ENCODE measurements at regions of chr22 and their contacts with region 1.

Region 1: GRCh38 chr22:40922484-40923303 is 28.5 kb upstream of the RBX1 start:
- DNase-seq: peak in 1 of 5 donors; percentile 14
- ATAC-seq: peak; percentile 29 to 77 (median 72)
- H3K4me3 ChIP-seq: no peak overlapping the region
- H3K27ac ChIP-seq: no peak overlapping the region
- H3K4me1 ChIP-seq: peaks cover 0 to 4% (median 0%) of the 10 kb centered on the region in 12 donors
- H3K27me3 ChIP-seq: no peaks in the 10 kb centered on the region
- CTCF ChIP-seq: peak; percentile 69 to 83 (median 76)
- POLR2A ChIP-seq: no peak

Region 2: DNA sequence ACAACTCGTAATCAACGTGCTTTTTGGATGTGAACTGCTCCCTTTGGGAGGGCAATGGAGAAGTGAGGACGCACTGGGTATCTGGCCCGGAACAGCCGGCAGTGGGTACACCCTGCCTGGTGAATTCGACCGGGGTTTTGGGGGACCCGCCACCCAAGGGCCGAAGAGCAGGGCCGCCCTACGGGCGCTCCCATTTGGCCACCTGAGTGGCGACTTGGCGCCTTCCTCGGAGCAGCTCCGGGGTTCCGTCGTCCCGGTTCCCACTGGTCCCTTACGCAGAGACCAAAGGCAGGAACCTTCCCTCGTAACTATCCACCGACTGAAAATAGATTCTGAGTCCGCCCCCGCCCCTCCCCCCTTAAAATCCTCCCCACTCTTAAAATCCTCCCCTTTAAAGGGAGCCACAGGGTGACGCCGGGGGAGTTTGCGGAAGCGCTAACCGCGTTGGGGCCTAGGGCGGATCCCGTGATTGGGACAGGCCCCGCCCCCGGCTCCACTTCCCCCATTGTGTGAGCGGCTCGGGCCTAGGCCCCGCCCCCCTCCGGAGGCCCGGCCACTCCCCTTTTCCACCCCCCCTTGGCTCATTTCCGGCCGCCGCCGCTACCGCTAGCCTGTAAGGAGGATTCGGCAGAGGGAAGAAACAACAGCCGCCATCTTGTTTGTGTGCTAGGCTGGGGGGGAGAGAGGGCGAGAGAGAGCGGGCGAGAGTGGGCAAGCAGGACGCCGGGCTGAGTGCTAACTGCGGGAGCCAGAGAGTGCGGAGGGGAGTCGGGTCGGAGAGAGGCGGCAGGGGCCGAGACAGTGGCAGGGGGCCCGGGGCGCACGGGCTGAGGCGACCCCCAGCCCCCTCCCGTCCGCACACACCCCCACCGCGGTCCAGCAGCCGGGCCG is 168.7 kb after region 1 on chr22:
- intact Hi-C with region 1: loop called in 1 of 10 experiments (anchors 10 kb)
- DNase-seq: peak; percentile 99 to 100 (median 99)
- ATAC-seq: peak; percentile 96 to 99 (median 98)
- H3K4me3 ChIP-seq: peak overlapping the region; percentile 73 to 100 (median 86)
- H3K27ac ChIP-seq: peak overlapping the region; percentile 98 to 100 (median 100)
- H3K4me1 ChIP-seq: peaks cover 10 to 35% (median 27%) of the 10 kb centered on the region in 12 donors
- H3K27me3 ChIP-seq: no peaks in the 10 kb centered on the region
- CTCF ChIP-seq: no peak
- POLR2A ChIP-seq: peak; percentile 41 to 76

Region 3: DNA sequence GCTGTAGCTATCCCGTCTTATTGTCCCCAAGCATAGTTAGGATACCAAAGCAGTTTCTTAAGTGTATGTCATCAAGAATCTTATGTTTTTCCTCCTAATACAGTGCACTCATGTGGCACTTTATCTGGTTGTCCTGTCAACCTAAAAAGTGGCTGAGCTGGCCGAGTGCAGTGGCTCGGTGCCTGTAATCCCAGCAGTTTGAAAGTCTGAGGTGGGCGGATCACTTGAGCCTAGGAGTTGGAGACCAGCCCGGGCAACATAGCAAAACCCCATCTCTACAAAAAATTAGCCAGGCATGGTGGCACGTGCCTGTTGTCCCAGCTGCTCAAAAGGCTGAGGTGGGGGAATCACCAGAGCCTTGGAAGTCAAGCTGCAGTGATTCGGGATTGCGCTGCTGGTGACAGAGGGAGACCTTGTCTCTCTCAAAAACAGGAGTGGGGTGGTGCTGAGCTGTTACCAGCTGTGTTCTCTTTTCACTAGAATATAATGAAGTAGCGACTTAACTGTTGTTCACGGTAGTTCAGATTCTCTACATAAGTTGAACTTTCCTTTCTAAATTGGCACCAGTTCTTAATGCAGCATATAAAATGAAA is 217.8 kb after region 1 on chr22:
- intact Hi-C with region 1: loop called in 2 of 10 experiments (anchors 5 to 10 kb)
- DNase-seq: peak in 2 of 5 donors; percentile 12 to 29
- ATAC-seq: peak; percentile 50 to 74 (median 66)
- H3K4me3 ChIP-seq: no peak overlapping the region
- H3K27ac ChIP-seq: peak overlapping the region in 1 of 12 donors; percentile 28
- H3K4me1 ChIP-seq: peaks cover 0 to 17% (median 7%) of the 10 kb centered on the region in 12 donors
- H3K27me3 ChIP-seq: no peaks in the 10 kb centered on the region
- CTCF ChIP-seq: no peak
- POLR2A ChIP-seq: no peak

Region 4: DNA sequence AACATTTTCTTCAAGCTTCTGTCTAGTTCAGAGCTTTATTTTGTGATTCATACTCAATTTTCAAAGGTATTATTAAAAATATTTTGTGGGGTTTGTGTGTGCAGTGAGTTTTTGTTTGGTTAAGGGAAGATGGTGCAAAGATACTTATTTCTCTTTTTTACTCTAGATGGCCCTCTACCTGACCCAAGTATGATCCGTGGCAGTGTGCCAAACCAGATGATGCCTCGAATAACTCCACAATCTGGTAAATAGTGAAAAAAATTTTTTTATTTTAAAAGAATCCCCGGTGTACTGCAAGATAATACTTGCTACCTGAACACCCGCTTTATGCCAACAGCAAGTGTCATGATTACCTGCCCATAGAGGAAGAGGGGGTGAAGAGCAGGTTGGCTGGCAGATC is 223.9 kb after region 1 on chr22:
- intact Hi-C with region 1: loop called in 2 of 10 experiments (anchors 5 to 10 kb)
- DNase-seq: no peak
- ATAC-seq: no peak
- H3K4me3 ChIP-seq: no peak overlapping the region
- H3K27ac ChIP-seq: no peak overlapping the region
- H3K4me1 ChIP-seq: no peaks in the 10 kb centered on the region
- H3K27me3 ChIP-seq: no peaks in the 10 kb centered on the region
- CTCF ChIP-seq: no peak
- POLR2A ChIP-seq: no peak

Region 5: GRCh38 chr22:41237707-41238569 is 315.2 kb after region 1 on chr22:
- intact Hi-C with region 1: loop called in 2 of 10 experiments (anchors 5 kb)
- DNase-seq: peak; percentile 74 to 89 (median 80)
- ATAC-seq: peak; percentile 10 to 77 (median 66)
- H3K4me3 ChIP-seq: peak overlapping the region in 11 of 12 donors; percentile 0 to 62 (median 53)
- H3K27ac ChIP-seq: peak overlapping the region in 11 of 12 donors; percentile 10 to 73 (median 58)
- H3K4me1 ChIP-seq: peaks cover 0 to 42% (median 17%) of the 10 kb centered on the region in 12 donors
- H3K27me3 ChIP-seq: no peaks in the 10 kb centered on the region
- CTCF ChIP-seq: peak; percentile 29 to 80 (median 56)
- POLR2A ChIP-seq: no peak

Region 6: DNA sequence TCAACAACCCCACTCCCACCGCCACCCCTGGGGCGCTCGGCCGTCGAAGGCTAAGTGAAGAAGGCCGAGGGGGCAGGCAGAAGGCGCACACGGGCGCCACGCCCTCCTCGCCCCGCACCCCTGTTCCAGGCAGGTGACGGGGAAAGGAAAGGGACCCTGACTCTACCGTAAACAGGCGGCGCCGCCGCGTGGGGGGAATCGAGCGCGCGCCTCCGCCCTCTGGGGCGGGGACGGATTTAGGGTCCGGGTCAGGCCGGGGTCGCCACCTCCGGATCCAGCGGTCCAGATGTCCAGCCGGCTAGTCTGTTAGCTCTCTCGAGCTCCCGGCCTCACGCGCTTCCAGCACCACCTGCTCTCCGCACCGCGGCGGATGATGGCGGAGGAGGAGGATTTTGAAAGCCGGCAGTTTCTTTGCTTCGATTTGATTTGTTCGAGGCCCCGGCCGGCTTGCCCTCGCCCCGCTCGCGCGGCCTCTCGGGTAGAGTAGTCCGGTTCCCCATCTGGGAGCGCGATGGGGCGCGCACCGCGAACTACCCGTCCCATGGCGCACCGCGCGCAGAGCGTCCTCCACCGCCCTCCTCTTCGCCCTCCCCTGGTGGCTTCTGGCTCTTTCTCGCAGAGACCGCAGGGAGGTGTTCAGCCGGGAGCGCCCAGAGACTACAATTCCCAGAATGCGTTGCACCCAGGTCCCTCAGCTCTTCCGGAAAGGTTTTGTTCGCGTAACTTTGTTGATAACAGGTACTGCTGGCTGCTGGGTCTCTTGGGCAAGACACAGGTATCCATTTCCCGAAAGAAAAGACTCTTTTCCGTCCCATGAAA is 363.3 kb after region 1 on chr22 and contains the start of gene RANGAP1:
- intact Hi-C with region 1: loop called in 1 of 10 experiments (anchors 10 kb)
- DNase-seq: peak; percentile 98 to 99 (median 99)
- ATAC-seq: peak; percentile 99 to 100 (median 100)
- H3K4me3 ChIP-seq: peak within 1 kb of the TSS; percentile 59 to 97 (median 80)
- H3K27ac ChIP-seq: peak within 1 kb of the TSS; percentile 56 to 91 (median 82)
- H3K4me1 ChIP-seq: peaks cover 0 to 34% (median 17%) of the 10 kb centered on the region in 12 donors
- H3K27me3 ChIP-seq: no peaks in the 10 kb centered on the region
- CTCF ChIP-seq: peak in 10 of 12 donors; percentile 11 to 52 (median 27)
- POLR2A ChIP-seq: peak in 1 of 2 donors; percentile 90
- total RNA-seq, gene RANGAP1: 27.7 to 75.6 (median 35.0) TPM

Region 7: DNA sequence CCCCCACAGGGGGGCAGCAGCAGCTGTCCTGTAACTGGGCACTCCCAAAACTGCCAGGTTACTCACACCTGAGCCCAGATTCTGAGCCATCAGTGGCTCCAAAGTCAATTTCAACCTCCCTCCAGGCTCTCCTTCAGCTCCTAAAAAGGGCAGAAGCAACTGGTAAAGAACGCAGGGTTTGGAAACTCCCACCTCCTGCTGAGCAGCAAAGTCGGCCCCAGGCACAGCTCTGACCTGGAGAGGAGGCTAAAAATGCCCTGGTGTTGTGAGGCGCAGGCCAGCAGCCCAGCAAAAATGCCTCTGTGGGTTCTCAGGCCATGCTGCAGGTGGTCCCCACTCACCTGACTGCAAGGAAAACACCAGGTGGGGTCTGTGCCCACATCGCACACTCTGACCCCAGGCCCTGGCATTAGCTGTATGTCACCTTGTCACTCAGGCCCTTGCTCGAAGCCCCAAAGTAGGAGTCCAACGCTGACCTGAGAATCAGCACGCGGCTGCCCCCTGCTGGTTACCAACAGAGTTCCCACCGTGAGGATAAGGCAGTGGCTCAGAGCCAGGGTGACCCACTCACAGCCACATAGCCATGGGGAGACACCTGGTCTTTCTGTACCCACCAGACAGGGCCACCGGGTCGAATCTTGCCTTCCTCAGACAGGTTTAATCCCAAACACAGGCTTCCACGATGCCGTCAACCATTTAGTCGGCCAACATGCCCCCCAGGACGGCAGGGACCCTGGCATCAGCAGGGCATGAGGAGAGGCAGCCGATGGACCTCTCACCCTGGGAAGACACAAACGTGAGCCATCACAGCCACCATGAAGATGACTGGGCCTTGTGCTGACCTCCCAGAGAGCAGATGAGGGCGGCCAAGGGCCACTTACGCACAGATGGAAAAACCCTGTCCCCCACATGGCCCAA is 610.5 kb after region 1 on chr22:
- intact Hi-C with region 1: loop called in 1 of 10 experiments (anchors 10 kb)
- DNase-seq: peak; percentile 71 to 89 (median 83)
- ATAC-seq: peak; percentile 46 to 67 (median 54)
- H3K4me3 ChIP-seq: no peak overlapping the region
- H3K27ac ChIP-seq: peak overlapping the region in 10 of 12 donors; percentile 57 to 81 (median 66)
- H3K4me1 ChIP-seq: peaks cover 0 to 33% (median 10%) of the 10 kb centered on the region in 12 donors
- H3K27me3 ChIP-seq: no peaks in the 10 kb centered on the region
- CTCF ChIP-seq: peak; percentile 71 to 84 (median 76)
- POLR2A ChIP-seq: no peak

Measured in heart left ventricle (tissue), 16 donors.